ENCODE measurements at regions of chr15 and their contacts with region 1.

Region 1: DNA sequence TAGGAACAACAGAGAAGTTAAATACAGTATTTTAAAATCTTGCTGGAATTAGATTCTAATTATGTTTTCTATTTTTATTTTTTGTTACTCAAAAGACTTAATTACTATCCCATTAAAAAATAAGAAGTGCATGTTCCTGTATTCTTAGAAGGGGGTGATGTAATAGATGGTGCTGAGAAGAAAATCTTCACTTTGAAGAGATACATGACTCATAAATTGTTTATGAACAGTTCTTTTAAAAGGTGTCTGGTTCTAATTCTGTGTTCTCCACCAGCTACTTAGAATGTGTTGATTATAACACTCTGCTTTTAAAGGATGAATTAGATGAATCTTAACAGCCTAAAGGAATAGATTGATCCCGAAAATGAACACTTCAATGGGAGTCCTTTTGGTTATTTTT is 8.2 kb downstream of the RCN2 start:
- DNase-seq: no peak

Region 2: GRCh38 chr15:77013776-77014131 is 74.0 kb after region 1 on chr15:
- intact Hi-C with region 1: no loop called
- DNase-seq: no peak

Region 3: DNA sequence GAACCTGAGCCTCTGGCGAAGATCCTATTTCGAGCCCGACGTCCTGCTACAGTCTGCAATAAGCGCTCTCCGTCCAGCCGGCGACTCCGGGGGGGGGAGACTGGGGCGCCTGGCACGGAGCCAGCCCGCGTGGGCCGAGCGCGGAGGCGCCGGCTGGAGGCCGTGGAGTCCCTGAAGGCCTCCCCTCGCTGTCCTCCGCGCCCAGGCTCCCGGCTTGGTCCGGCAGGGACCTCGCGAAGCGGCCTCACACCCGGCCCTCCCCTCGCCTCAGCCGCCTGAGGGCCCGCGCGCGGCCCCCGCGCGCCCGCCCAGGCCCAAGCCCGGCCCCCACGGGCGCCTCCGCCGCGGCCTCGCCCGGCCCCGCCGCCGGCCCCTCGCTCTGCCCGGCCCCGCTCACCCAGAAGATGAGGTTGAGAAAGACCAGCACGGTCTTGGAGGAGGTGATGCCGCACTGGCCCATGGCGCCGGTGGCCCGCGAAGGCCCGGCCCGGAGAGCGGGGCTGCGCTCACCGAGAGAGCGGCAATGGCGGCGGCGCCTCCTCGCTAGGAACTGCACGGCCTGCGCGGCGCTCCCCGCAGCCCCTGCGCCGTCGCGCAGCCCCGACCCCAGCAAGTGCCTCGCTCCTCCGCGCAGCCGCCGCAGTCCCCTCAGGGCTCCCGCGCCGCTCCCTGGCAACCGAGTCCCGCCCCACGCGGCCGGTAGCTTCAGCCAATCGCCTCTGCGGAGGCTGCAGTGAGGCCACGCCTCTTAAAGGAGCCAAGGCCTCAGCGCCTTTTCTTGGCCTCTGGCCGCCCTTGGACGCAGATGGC is 131.0 kb after region 1 on chr15 and contains the start of gene TSPAN3:
- intact Hi-C with region 1: loop called (anchors 10 kb)
- DNase-seq: peak; percentile 87 to 98 (median 96)